Activated naive CD4-positive, alpha-beta T cell treated with anti-CD3 and anti-CD28 coated beads for 36 hours (primary cell): ENCODE measurements at regions of chr6 and their contacts with region 1.

Region 1: DNA sequence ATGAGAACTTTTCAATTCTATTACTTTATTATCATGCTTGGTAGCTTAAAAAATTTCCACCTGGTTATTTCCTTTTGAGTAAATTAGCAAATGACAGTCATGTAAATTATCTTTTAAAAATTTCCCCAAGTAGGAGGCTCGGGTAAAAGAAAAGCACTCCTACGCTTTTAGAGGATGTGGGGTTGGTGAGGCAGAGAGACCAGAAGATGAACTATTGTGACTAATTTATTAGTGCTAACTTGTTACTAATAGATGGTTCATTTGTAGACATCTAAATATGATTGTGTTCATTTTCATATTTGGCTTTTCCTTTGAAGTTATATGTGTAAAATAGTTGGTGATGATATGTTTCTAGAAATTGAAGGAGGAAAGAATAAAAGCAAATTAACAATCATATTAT is 27.0 kb downstream of the ZNF292 start:
- DNase-seq: peak; percentile 55
- H3K4me3 Mint-ChIP-seq: peak overlapping the region; percentile 51
- H3K27ac Mint-ChIP-seq: peak overlapping the region; percentile 91
- H3K4me1 Mint-ChIP-seq: peaks cover 79% of the 10 kb centered on the region
- H3K27me3 Mint-ChIP-seq: no peaks in the 10 kb centered on the region

Region 2: DNA sequence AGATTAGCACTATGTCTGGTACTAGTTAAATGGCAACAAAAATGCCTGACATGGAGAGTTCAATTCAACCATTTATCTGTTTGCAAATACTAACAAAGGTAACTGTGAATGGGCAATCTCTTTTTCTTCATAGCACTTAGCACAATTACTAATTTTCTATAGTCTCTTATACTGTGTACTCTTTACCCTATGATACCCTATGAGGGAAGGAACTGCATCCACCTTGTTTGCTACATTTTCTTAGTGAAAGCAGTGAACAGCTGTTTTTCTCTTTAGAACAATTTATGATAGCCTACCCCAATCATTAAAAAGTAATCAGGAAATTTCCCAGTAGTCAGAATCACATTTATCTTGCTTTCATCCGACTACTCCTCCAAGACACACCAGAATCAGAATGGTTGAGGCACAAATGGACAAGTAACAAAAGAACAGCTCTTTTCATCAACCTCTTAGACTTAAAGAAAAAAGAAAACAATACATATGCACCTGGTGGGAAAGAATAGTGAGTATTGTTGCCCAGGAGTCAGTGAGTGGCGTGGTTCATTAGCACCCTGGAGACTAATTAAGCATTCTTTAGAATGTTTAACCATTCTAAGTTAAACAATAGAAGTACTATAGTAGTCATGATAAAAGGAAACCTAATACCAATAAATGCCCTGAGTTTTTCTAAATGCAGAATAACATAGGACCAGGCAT is 10.2 kb before region 1 on chr6:
- CTCF ChIA-PET with region 1: no interaction called
- intact Hi-C with region 1: no loop called
- DNase-seq: no peak
- H3K4me3 Mint-ChIP-seq: no peak overlapping the region
- H3K27ac Mint-ChIP-seq: no peak overlapping the region
- H3K4me1 Mint-ChIP-seq: peaks cover 69% of the 10 kb centered on the region
- H3K27me3 Mint-ChIP-seq: no peaks in the 10 kb centered on the region

Region 3: GRCh38 chr6:87197547-87197946 is 15.2 kb after region 1 on chr6:
- CTCF ChIA-PET with region 1: interaction called, 6 read pairs
- intact Hi-C with region 1: loop called (anchors 1 kb)
- DNase-seq: peak; percentile 33
- H3K4me3 Mint-ChIP-seq: no peak overlapping the region
- H3K27ac Mint-ChIP-seq: peak overlapping the region; percentile 68
- H3K4me1 Mint-ChIP-seq: peaks cover 78% of the 10 kb centered on the region
- H3K27me3 Mint-ChIP-seq: no peaks in the 10 kb centered on the region

Region 4: DNA sequence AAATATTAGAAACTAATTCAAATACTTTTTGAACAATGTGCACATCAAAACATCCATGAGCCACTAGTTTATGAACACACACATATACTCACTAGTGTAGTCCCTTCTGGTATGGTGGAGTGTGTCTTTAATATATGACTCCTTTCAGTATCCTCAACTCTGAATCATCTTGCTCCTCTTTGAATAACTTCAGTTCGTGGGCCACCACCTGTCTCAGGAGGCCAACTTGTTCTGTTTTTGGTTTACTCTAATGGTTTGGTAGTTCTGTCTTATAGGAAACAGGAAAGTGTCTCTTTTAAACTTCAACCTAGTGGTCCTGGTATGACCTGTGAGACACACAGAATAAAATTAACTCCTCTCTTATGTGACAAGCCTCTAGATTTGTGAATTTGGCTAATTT is 28.7 kb after region 1 on chr6:
- CTCF ChIA-PET with region 1: no interaction called
- intact Hi-C with region 1: loop called (anchors 1 kb)
- DNase-seq: peak; percentile 73
- H3K4me3 Mint-ChIP-seq: no peak overlapping the region
- H3K27ac Mint-ChIP-seq: peak overlapping the region; percentile 84
- H3K4me1 Mint-ChIP-seq: peaks cover 73% of the 10 kb centered on the region
- H3K27me3 Mint-ChIP-seq: no peaks in the 10 kb centered on the region

Region 5: DNA sequence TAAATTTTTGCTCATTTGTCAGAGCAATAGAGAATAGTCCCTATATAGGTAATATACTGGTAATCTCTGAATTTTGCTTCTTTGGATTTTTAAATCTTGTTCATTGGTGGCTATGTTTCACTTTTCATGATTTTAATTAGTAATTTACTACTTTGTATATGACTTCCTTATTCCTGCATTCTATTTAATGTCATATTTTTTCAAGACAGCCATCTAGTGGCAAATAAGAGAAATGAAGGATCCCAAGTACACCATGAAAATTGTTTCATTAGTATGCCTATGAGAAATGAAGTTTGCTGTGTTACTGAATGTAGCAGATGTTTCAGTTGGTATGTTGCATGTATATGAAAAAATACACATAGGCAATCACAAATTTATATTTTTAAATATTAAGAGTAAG is 55.5 kb after region 1 on chr6:
- CTCF ChIA-PET with region 1: no interaction called
- intact Hi-C with region 1: loop called (anchors 2 kb)
- DNase-seq: no peak
- H3K4me3 Mint-ChIP-seq: no peak overlapping the region
- H3K27ac Mint-ChIP-seq: no peak overlapping the region
- H3K4me1 Mint-ChIP-seq: peaks cover 4% of the 10 kb centered on the region
- H3K27me3 Mint-ChIP-seq: no peaks in the 10 kb centered on the region

Region 6: GRCh38 chr6:87291883-87292282 is 109.6 kb after region 1 on chr6:
- CTCF ChIA-PET with region 1: no interaction called
- intact Hi-C with region 1: no loop called
- DNase-seq: no peak
- H3K4me3 Mint-ChIP-seq: no peak overlapping the region
- H3K27ac Mint-ChIP-seq: no peak overlapping the region
- H3K4me1 Mint-ChIP-seq: no peaks in the 10 kb centered on the region
- H3K27me3 Mint-ChIP-seq: peaks cover 3% of the 10 kb centered on the region

Region 7: GRCh38 chr6:87731818-87732661 is 549.7 kb after region 1 on chr6:
- CTCF ChIA-PET with region 1: no interaction called
- intact Hi-C with region 1: loop called (anchors 10 kb)
- DNase-seq: peak; percentile 70
- H3K4me3 Mint-ChIP-seq: no peak overlapping the region
- H3K27ac Mint-ChIP-seq: peak overlapping the region; percentile 15
- H3K4me1 Mint-ChIP-seq: peaks cover 26% of the 10 kb centered on the region
- H3K27me3 Mint-ChIP-seq: no peaks in the 10 kb centered on the region